Gastrocnemius medialis (tissue), 4 donors: ENCODE measurements at regions of chr20 and their contacts with region 1.

Region 1: DNA sequence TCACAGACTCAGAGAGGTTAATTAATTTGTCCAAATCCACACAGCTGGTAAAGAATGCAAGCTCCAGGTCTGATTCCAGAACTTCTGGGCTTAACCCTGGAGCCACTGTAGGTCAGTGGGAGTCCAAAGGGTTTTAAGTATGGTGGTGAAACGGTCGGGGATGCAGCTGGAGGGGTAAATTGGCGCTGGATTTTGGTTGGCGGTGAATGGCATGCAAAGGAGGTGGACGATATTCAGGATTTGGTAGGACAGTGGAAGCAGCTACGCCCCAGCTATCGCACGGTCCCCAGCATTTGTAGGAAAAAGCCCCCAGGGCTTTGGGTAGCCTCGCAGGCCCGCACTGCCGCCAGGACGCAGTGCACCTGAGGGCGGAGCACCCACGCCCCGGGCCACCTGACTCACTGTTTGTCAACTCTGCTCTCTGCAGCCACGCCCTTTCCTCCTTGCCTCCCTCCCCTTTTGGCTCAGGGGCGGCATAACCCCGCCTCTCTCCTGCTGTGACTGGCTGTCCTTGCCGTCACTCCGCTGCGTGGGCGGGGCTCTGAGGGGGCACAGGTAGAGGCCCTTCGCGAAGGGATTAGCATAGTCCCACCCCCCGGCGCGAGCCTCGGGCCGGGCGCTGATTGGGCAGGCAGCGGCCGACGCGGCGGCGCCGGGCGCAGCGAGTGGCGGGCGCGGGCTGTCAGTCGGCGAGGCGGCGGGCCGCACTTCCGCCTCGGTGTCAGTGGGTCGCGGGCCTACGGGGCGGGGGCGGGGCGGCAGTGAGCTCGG is at the start of gene OSBPL2:
- DNase-seq: peak; percentile 99
- ATAC-seq: peak; percentile 90
- H3K4me3 ChIP-seq: peak within 1 kb of the TSS; percentile 63 to 86 (median 74)
- H3K27ac ChIP-seq: peak within 1 kb of the TSS; percentile 87 to 96 (median 92)
- H3K4me1 ChIP-seq: peaks cover 42 to 57% of the 10 kb centered on the region in 2 donors
- H3K27me3 ChIP-seq: no peaks in the 10 kb centered on the region
- CTCF ChIP-seq: no peak
- POLR2A ChIP-seq: peak; percentile 80 to 84
- total RNA-seq, gene OSBPL2: 15.8 to 26.4 (median 19.6) TPM

Region 2: DNA sequence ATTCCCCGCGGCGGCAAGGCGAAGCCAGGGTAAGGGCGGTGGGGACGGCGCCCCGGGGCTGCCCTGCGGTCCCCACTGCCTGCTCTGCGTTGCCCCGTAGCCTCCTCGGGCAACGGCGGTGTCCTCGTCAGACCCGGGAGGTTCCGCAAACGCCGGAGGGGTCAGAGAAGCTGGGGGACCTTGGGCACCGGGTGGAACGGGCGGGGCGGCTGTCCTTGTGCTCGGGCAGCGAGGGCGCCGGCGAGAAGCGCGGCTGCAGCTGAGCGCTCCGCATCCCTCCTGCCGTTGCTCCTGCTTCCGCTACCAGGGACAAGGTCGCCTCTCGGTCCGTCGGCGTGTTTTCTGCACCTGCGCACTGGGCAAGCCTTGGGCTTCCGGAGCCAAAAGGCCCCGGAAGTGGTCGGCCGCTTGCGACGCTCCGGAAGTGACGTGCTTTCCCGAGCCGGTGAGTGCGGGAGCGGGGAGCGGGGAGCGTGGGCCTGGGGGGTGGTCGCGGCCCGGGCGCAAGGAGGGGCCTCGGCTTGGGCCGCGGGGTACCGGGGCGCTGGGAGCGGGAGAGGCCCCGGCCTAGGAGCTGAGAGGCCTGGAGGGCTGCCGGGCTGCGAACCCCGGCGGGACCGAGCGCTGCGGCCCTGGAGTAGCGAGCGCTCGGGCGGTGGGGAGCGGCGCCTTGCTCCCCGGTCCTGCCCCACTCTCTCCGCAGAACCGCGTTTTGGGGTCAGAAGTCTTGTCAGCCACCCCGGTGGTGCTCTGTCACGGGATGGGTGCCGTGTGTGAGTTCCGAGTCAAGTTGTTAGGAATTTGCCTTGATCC is 55.2 kb before region 1 on chr20 and contains the start of gene MTG2:
- in situ Hi-C with region 1: no loop called
- intact Hi-C with region 1: loop called (anchors 1 kb)
- DNase-seq: peak; percentile 92 to 94
- ATAC-seq: peak; percentile 98
- H3K4me3 ChIP-seq: peak within 1 kb of the TSS; percentile 77 to 99 (median 84)
- H3K27ac ChIP-seq: peak within 1 kb of the TSS; percentile 87 to 97 (median 90)
- H3K4me1 ChIP-seq: peaks cover 16 to 20% of the 10 kb centered on the region in 2 donors
- H3K27me3 ChIP-seq: no peaks in the 10 kb centered on the region
- CTCF ChIP-seq: peak in 3 of 5 experiments; percentile 14 to 25 (median 15)
- POLR2A ChIP-seq: peak; percentile 89 to 93
- total RNA-seq, gene MTG2: 21.0 to 50.8 (median 29.3) TPM